ENCODE measurements at regions of chr15 and their contacts with region 1.

Region 1: DNA sequence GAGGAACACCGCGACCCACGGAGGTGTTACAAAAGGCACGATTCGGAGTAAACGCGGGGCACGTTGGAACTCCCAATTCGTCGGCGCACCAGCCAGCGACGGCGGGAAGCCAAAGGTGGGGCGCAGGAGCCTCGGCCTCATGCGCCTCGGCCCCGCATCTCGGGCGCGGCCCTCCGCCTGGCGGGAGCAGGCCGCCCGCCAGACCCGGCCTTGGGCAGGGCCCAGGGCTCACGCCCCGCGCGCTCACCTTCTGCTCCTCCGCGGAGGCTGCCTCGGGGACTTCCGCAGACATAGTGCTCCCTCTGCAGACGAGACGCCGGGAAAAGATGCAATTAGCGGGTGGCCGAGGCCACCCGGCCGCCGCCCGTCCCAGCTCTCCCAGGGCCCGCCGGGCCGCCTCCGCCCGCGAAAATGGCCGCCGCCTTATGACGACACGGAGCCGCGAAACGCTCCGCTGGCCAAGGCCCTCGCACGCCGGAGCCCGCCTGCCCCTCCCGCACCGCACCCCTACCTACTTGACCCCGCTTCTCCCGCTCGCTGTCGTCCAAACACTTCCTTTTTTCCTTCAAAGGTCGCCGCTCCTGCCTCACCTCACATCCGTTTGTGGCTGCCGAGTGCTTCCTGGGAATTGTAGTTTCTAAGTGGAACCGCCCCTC is at the start of gene ARPP19:
- DNase-seq: peak; percentile 93
- H3K4me3 ChIP-seq: peak within 1 kb of the TSS; percentile 57
- H3K27ac ChIP-seq: peak within 1 kb of the TSS; percentile 92
- H3K4me1 ChIP-seq: peaks cover 8% of the 10 kb centered on the region
- H3K27me3 ChIP-seq: no peaks in the 10 kb centered on the region
- CTCF ChIP-seq: no peak
- total RNA-seq, gene ARPP19: 173 and 186 TPM in 2 replicates

Region 2: GRCh38 chr15:52679232-52680040 is 110.7 kb after region 1 on chr15 and contains the start of gene ATOSA:
- CTCF ChIA-PET with region 1: no interaction called
- POLR2A ChIA-PET with region 1: no interaction called
- intact Hi-C with region 1: loop called (anchors 5 kb)
- DNase-seq: peak; percentile 90
- H3K4me3 ChIP-seq: peak within 1 kb of the TSS; percentile 87
- H3K27ac ChIP-seq: peak within 1 kb of the TSS; percentile 74
- H3K4me1 ChIP-seq: no peaks in the 10 kb centered on the region
- H3K27me3 ChIP-seq: peaks cover 21% of the 10 kb centered on the region
- CTCF ChIP-seq: no peak
- total RNA-seq, gene ATOSA: 5.3 and 6.1 TPM in 2 replicates